Naive thymus-derived CD4-positive, alpha-beta T cell (primary cell): ENCODE measurements at regions of chr6 and their contacts with region 1.

Region 1: DNA sequence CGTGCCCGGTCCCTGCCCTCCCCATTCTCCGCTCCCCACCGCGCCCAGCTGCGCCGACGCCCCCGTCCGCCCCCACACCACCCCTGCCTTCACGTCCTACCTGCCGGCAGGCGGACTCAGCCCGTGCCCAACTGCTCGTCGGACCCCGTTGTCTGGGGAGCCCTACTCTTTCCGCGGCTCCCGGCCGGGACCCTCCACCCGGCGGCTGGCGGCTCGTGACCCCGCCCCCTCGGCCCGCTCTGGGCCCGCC is at the start of gene SERAC1:
- DNase-seq: no peak
- ATAC-seq: peak; percentile 59
- H3K4me3 ChIP-seq: peak within 1 kb of the TSS; percentile 88
- H3K4me3 Mint-ChIP-seq: peak within 1 kb of the TSS; percentile 81 to 96 (median 96)
- H3K27ac ChIP-seq: peak within 1 kb of the TSS; percentile 96
- H3K27ac Mint-ChIP-seq: peak within 1 kb of the TSS; percentile 90 to 99 (median 98)
- H3K4me1 ChIP-seq: peaks cover 0 to 5% of the 10 kb centered on the region in 2 donors
- H3K4me1 Mint-ChIP-seq: peaks cover 14 to 46% (median 27%) of the 10 kb centered on the region in 7 donors
- H3K27me3 ChIP-seq: no peaks in the 10 kb centered on the region
- H3K27me3 Mint-ChIP-seq: no peaks in the 10 kb centered on the region
- total RNA-seq, gene SERAC1: 2.4 to 5.4 (median 4.6) TPM

Region 2: GRCh38 chr6:157323255-157323965 is 844.6 kb before region 1 on chr6 and contains the start of gene TMEM242:
- CTCF ChIA-PET with region 1: no interaction called
- POLR2A ChIA-PET with region 1: no interaction called
- intact Hi-C with region 1: loop called in 1 of 2 experiments (anchors 1 kb)
- DNase-seq: peak; percentile 68 to 93 (median 81)
- ATAC-seq: peak; percentile 98
- H3K4me3 ChIP-seq: peak within 1 kb of the TSS; percentile 95
- H3K4me3 Mint-ChIP-seq: peak within 1 kb of the TSS; percentile 93 to 99 (median 95)
- H3K27ac ChIP-seq: peak within 1 kb of the TSS; percentile 76
- H3K27ac Mint-ChIP-seq: peak within 1 kb of the TSS; percentile 78 to 93 (median 92)
- H3K4me1 ChIP-seq: peaks cover 8 to 12% of the 10 kb centered on the region in 2 donors
- H3K4me1 Mint-ChIP-seq: peaks cover 10 to 47% (median 24%) of the 10 kb centered on the region in 7 donors
- H3K27me3 ChIP-seq: no peaks in the 10 kb centered on the region
- H3K27me3 Mint-ChIP-seq: peaks cover 0 to 30% (median 10%) of the 10 kb centered on the region in 5 donors
- total RNA-seq, gene TMEM242: 11.6 to 15.6 (median 13.2) TPM

Region 3: DNA sequence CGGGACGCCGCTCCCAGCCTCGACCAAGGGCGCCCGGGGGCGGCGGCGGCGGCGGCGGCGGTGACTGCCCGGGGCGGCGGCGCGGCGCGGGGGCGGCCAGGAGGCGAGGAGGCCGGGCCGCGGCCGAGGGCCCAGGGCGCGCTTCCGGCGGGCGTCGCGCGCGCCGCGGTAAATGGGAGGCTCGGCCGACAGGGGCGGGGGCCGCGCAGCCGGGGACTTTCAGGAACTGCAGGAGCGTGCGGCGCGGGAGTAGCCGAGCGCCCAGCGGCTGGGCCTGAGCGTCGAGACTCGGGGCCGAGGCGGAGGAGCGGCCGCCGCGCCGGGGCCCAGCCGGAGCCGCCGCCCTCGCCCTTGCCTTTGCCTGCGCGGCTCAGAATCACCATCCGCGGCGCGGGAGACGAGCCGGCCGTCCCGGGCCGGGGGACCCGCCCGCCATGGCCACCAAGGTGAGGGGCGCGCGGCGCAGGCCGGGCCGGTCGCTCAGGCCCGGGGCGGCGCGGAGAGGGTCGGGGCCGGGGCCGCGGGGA is 344.9 kb before region 1 on chr6 and contains the start of gene SNX9:
- CTCF ChIA-PET with region 1: no interaction called
- POLR2A ChIA-PET with region 1: no interaction called
- intact Hi-C with region 1: loop called (anchors 5 to 10 kb)
- DNase-seq: peak in 8 of 9 donors; percentile 27 to 74 (median 56)
- ATAC-seq: peak; percentile 77
- H3K4me3 ChIP-seq: peak within 1 kb of the TSS; percentile 60
- H3K4me3 Mint-ChIP-seq: peak within 1 kb of the TSS; percentile 88 to 100 (median 96)
- H3K27ac ChIP-seq: peak within 1 kb of the TSS; percentile 96
- H3K27ac Mint-ChIP-seq: peak within 1 kb of the TSS; percentile 95 to 100 (median 99)
- H3K4me1 ChIP-seq: peaks cover 9 to 16% of the 10 kb centered on the region in 2 donors
- H3K4me1 Mint-ChIP-seq: peaks cover 15 to 70% (median 57%) of the 10 kb centered on the region in 7 donors
- H3K27me3 ChIP-seq: no peaks in the 10 kb centered on the region
- H3K27me3 Mint-ChIP-seq: peaks cover 0 to 42% (median 0%) of the 10 kb centered on the region in 5 donors
- total RNA-seq, gene SNX9: 13.4 to 39.2 (median 36.4) TPM

Region 4: GRCh38 chr6:158207422-158207788 is 39.4 kb after region 1 on chr6:
- CTCF ChIA-PET with region 1: no interaction called
- POLR2A ChIA-PET with region 1: no interaction called
- intact Hi-C with region 1: loop called in 1 of 2 experiments (anchors 1 kb)
- DNase-seq: peak in 4 of 9 donors; percentile 9 to 42 (median 18)
- ATAC-seq: peak; percentile 54
- H3K4me3 ChIP-seq: no peak overlapping the region
- H3K4me3 Mint-ChIP-seq: peak overlapping the region in 7 of 10 donors; percentile 2 to 66 (median 22)
- H3K27ac ChIP-seq: no peak overlapping the region
- H3K27ac Mint-ChIP-seq: peak overlapping the region in 7 of 9 donors; percentile 4 to 90 (median 25)
- H3K4me1 ChIP-seq: no peaks in the 10 kb centered on the region
- H3K4me1 Mint-ChIP-seq: peaks cover 6 to 47% (median 13%) of the 10 kb centered on the region in 7 donors
- H3K27me3 ChIP-seq: no peaks in the 10 kb centered on the region
- H3K27me3 Mint-ChIP-seq: peaks cover 0 to 10% (median 4%) of the 10 kb centered on the region in 5 donors

Region 5: DNA sequence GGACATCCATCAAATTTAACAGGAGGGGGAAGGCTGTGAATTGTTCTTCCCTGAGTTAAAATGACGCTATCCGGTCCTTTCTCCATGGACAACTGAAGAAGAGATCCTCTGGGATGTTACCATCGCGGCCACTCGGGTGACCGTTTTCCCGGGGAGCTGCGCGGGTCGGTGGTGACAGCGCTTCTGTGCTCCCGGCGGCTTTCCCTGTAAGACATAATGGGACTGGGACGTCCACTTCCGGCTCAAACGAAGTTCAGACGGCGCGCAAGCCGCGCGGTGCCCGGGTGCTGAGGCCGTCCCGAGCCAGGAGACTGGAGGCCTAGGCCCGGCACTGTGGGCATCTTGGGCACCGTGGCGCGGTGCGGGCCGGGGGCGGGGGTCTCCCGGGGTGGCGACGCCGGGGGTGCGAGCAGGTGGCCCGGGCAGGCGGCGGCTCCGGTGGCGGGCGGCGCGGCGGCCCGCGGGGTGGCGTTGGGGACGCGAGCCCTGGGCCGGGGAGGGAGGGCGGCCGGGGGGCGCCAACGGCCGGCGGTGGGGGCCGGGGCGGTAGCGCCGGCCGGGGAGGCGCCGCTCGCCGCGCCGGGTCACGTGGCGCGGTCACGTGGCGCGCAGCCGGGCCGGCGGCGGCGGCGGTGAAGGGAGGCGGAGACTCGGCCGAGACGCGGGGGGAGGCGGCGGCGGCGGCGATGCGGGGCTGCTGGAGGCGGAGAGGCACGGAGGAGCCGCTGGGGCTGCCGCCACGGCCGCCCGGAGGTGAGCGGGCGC is 63.8 kb after region 1 on chr6:
- CTCF ChIA-PET with region 1: no interaction called
- POLR2A ChIA-PET with region 1: no interaction called
- intact Hi-C with region 1: loop called in 1 of 2 experiments (anchors 1 kb)
- DNase-seq: peak; percentile 57 to 84 (median 71)
- ATAC-seq: peak; percentile 86
- H3K4me3 ChIP-seq: peak overlapping the region; percentile 62
- H3K4me3 Mint-ChIP-seq: peak overlapping the region; percentile 85 to 96 (median 92)
- H3K27ac ChIP-seq: peak overlapping the region; percentile 77
- H3K27ac Mint-ChIP-seq: peak overlapping the region; percentile 86 to 94 (median 89)
- H3K4me1 ChIP-seq: peaks cover 6 to 18% of the 10 kb centered on the region in 2 donors
- H3K4me1 Mint-ChIP-seq: peaks cover 22 to 44% (median 38%) of the 10 kb centered on the region in 7 donors
- H3K27me3 ChIP-seq: no peaks in the 10 kb centered on the region
- H3K27me3 Mint-ChIP-seq: peaks cover 0 to 14% (median 0%) of the 10 kb centered on the region in 5 donors

Region 6: DNA sequence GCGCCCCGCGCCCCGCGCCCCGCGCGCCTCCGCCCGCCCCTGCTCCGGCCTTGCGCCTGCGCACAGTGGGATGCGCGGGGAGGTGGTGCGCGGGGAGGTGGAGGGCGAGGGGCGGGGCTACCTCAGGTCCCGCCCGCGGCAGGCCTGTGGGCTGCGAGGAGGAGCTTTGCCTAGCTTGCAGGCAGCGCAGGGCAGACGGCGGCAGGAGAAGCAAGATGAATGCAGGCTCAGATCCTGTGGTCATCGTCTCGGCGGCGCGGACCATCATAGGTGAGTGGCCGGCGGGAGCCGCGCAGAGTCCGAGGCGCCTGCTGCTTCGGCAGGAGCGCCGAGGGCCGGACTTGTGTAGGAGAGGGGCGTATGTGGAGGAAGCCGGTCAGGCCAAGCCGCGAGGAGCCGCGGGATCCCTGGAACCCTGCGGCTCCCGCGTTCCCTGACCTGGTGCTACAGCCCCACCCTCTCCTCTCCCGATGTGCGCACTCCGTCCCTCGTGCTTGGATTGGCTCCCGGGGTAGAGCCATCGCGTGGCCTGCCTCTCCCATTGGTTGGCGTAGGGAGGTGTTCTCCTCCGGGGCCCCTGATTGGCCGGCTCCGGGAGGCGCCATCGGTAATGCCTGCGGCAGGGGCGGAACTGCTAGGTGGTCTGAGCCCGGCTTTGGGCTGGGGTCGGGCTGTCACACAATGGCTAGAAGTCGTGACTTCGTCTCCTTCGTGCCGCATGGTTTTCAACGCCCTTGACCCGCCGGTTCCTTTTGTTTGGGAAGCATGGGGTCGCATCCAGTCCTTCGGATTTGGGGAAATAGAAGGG is 1594.1 kb after region 1 on chr6 and contains the start of gene ACAT2:
- CTCF ChIA-PET with region 1: no interaction called
- POLR2A ChIA-PET with region 1: no interaction called
- intact Hi-C with region 1: loop called in 1 of 2 experiments (anchors 5 kb)
- DNase-seq: peak; percentile 89 to 95 (median 93)
- ATAC-seq: peak; percentile 94
- H3K4me3 ChIP-seq: peak within 1 kb of the TSS; percentile 99
- H3K4me3 Mint-ChIP-seq: peak within 1 kb of the TSS; percentile 84 to 97 (median 94)
- H3K27ac ChIP-seq: peak within 1 kb of the TSS; percentile 98
- H3K27ac Mint-ChIP-seq: peak within 1 kb of the TSS; percentile 93 to 99 (median 97)
- H3K4me1 ChIP-seq: peaks cover 6 to 15% of the 10 kb centered on the region in 2 donors
- H3K4me1 Mint-ChIP-seq: peaks cover 23 to 49% (median 34%) of the 10 kb centered on the region in 7 donors
- H3K27me3 ChIP-seq: no peaks in the 10 kb centered on the region
- H3K27me3 Mint-ChIP-seq: no peaks in the 10 kb centered on the region
- total RNA-seq, gene ACAT2: 18.5 to 53.9 (median 28.0) TPM